ENCODE measurements at regions of chr11 and their contacts with region 1.

Region 1: DNA sequence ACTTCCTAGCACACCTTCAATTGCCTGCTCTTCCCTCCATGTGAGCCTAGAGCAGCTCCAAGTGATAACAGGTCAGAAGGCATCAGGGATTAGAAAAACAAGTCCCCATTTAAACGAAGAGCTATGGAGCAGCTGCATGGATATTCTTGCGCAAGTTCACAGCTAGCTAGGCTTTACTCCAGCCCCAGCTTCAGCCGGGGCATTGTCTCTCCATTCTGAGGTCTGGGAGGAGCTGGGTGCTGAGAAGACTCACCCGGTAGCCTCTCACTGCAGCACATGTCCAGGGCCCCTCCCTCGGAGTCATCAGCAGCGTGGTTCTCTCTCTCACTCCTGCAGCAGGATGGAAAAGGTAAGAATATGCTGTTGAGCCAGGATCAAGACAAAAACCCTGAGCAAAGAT is 26.0 kb downstream of the PTPN5 start:
- DNase-seq: no peak
- H3K4me3 Mint-ChIP-seq: no peak overlapping the region
- H3K27ac Mint-ChIP-seq: no peak overlapping the region
- H3K4me1 Mint-ChIP-seq: peaks cover 35% of the 10 kb centered on the region
- H3K27me3 Mint-ChIP-seq: peaks cover 7% of the 10 kb centered on the region

Region 2: GRCh38 chr11:18548001-18548400 is 217.6 kb before region 1 on chr11:
- CTCF ChIA-PET with region 1: no interaction called
- POLR2A ChIA-PET with region 1: no interaction called
- DNase-seq: no peak
- H3K4me3 Mint-ChIP-seq: no peak overlapping the region
- H3K27ac Mint-ChIP-seq: no peak overlapping the region
- H3K4me1 Mint-ChIP-seq: no peaks in the 10 kb centered on the region
- H3K27me3 Mint-ChIP-seq: no peaks in the 10 kb centered on the region

Region 3: GRCh38 chr11:18731949-18732821 is 33.4 kb before region 1 on chr11:
- CTCF ChIA-PET with region 1: interaction called, 13 read pairs
- POLR2A ChIA-PET with region 1: no interaction called
- DNase-seq: peak; percentile 70
- H3K4me3 Mint-ChIP-seq: no peak overlapping the region
- H3K27ac Mint-ChIP-seq: no peak overlapping the region
- H3K4me1 Mint-ChIP-seq: peaks cover 5% of the 10 kb centered on the region
- H3K27me3 Mint-ChIP-seq: peaks cover 2% of the 10 kb centered on the region